Activated CD4-positive, alpha-beta memory T cell treated with anti-CD3 and anti-CD28 coated beads, Interleukin-2, amount 10 ng/mL, durations not matched to agents 7 days and 5 days (primary cell): ENCODE measurements at regions of chr14 and their contacts with region 1.

Region 1: DNA sequence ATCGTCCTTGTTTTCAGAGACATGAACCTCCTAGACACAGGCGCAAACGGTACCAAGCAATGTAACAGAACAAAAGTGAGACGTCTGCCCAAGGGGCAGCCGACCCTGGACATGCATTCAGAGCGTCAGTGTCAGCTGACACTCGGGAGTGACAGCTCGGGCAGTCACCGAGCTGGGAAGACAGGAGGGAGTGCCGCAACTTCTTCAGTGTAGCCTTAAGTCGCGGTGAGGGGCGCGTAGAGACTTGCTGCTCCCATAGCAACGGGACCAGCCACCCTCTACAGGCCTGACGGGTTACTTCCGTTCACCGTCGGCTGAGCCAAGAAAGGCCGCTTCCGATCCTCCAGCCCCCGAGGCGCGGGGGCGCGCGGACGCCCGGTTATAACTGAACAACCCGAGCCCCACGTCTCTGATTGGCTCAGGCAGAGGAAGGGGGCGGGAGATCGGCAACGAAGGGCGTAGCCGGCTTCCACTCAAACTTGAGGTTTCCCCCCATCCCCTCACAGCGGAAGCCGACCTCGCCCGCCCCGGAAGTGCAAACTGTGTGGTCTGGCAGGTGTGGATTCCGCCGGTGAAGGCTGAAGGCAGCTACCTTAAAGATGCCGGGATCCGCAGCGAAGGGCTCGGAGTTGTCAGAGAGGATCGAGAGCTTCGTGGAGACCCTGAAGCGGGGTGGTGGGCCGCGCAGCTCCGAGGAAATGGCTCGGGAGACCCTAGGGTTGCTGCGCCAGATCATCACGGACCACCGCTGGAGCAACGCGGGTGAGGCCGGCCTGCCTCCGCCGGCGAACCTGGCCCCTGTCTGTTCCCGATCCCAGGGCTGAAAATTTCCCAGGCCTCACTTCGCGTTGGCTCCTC is at the start of gene EIF2B2:
- DNase-seq: peak; percentile 99
- H3K4me3 Mint-ChIP-seq: peak within 1 kb of the TSS; percentile 92
- H3K27ac Mint-ChIP-seq: peak within 1 kb of the TSS; percentile 84
- H3K4me1 Mint-ChIP-seq: peaks cover 47% of the 10 kb centered on the region
- H3K27me3 Mint-ChIP-seq: peaks cover 3% of the 10 kb centered on the region
- total RNA-seq, gene EIF2B2: 63.7 to 64.0 TPM

Region 2: GRCh38 chr14:74881431-74882361 is 120.9 kb before region 1 on chr14 and contains the start of gene DLST:
- CTCF ChIA-PET with region 1: no interaction called
- POLR2A ChIA-PET with region 1: interaction called, 13 read pairs
- DNase-seq: peak; percentile 87
- H3K4me3 Mint-ChIP-seq: peak within 1 kb of the TSS; percentile 91
- H3K27ac Mint-ChIP-seq: peak within 1 kb of the TSS; percentile 92
- H3K4me1 Mint-ChIP-seq: peaks cover 61% of the 10 kb centered on the region
- H3K27me3 Mint-ChIP-seq: no peaks in the 10 kb centered on the region
- total RNA-seq, gene DLST: 106 to 108 TPM

Region 3: GRCh38 chr14:75013290-75013689 is 10.7 kb after region 1 on chr14:
- CTCF ChIA-PET with region 1: interaction called, 5 read pairs
- POLR2A ChIA-PET with region 1: interaction called, 17 read pairs
- DNase-seq: no peak
- H3K4me3 Mint-ChIP-seq: no peak overlapping the region
- H3K27ac Mint-ChIP-seq: no peak overlapping the region
- H3K4me1 Mint-ChIP-seq: peaks cover 13% of the 10 kb centered on the region
- H3K27me3 Mint-ChIP-seq: no peaks in the 10 kb centered on the region

Region 4: GRCh38 chr14:75022655-75023054 is 20.0 kb after region 1 on chr14:
- CTCF ChIA-PET with region 1: interaction called, 12 read pairs
- POLR2A ChIA-PET with region 1: interaction called, 5 read pairs
- DNase-seq: no peak
- H3K4me3 Mint-ChIP-seq: no peak overlapping the region
- H3K27ac Mint-ChIP-seq: no peak overlapping the region
- H3K4me1 Mint-ChIP-seq: no peaks in the 10 kb centered on the region
- H3K27me3 Mint-ChIP-seq: no peaks in the 10 kb centered on the region

Region 5: GRCh38 chr14:75063407-75064213 is 61.0 kb after region 1 on chr14 and contains the start of gene ACYP1:
- CTCF ChIA-PET with region 1: interaction called, 7 read pairs
- POLR2A ChIA-PET with region 1: interaction called, 22 read pairs
- DNase-seq: peak; percentile 93
- H3K4me3 Mint-ChIP-seq: peak within 1 kb of the TSS; percentile 99
- H3K27ac Mint-ChIP-seq: peak within 1 kb of the TSS; percentile 92
- H3K4me1 Mint-ChIP-seq: peaks cover 42% of the 10 kb centered on the region
- H3K27me3 Mint-ChIP-seq: no peaks in the 10 kb centered on the region
- total RNA-seq, gene ACYP1: 52.7 to 53.8 TPM

Region 6: GRCh38 chr14:75069045-75069810 is 66.6 kb after region 1 on chr14 and contains the start of gene ZC2HC1C:
- CTCF ChIA-PET with region 1: interaction called, 7 read pairs
- POLR2A ChIA-PET with region 1: interaction called, 22 read pairs
- DNase-seq: peak; percentile 73
- H3K4me3 Mint-ChIP-seq: peak within 1 kb of the TSS; percentile 22
- H3K27ac Mint-ChIP-seq: no peak within 1 kb of the TSS
- H3K4me1 Mint-ChIP-seq: peaks cover 17% of the 10 kb centered on the region
- H3K27me3 Mint-ChIP-seq: no peaks in the 10 kb centered on the region
- total RNA-seq, gene ZC2HC1C: 2.0 to 2.4 TPM

Region 7: GRCh38 chr14:75198291-75198933 is 195.8 kb after region 1 on chr14:
- CTCF ChIA-PET with region 1: no interaction called
- POLR2A ChIA-PET with region 1: no interaction called
- DNase-seq: no peak
- H3K4me3 Mint-ChIP-seq: no peak overlapping the region
- H3K27ac Mint-ChIP-seq: no peak overlapping the region
- H3K4me1 Mint-ChIP-seq: peaks cover under 1% of the 10 kb centered on the region
- H3K27me3 Mint-ChIP-seq: peaks cover 9% of the 10 kb centered on the region